ENCODE measurements at regions of chr20 and their contacts with region 1.

Region 1: GRCh38 chr20:11204926-11205768 is 531.3 kb upstream of the JAG1 start:
- DNase-seq: peak; percentile 9
- CTCF ChIP-seq: peak; percentile 89

Region 2: GRCh38 chr20:10553326-10553984 is 651.7 kb before region 1 on chr20:
- in situ Hi-C with region 1: loop called (anchors 25 kb)
- DNase-seq: peak; percentile 26
- CTCF ChIP-seq: peak; percentile 86

Region 3: GRCh38 chr20:11140359-11140758 is 64.8 kb before region 1 on chr20:
- in situ Hi-C with region 1: no loop called
- DNase-seq: no peak
- CTCF ChIP-seq: no peak

Region 4: GRCh38 chr20:11469795-11470435 is 264.8 kb after region 1 on chr20:
- in situ Hi-C with region 1: no loop called
- DNase-seq: no peak
- CTCF ChIP-seq: no peak

Measured in GM13977 (cell line).